Calu3 (cell line): ENCODE measurements at regions of chr4 and their contacts with region 1.

Region 1: DNA sequence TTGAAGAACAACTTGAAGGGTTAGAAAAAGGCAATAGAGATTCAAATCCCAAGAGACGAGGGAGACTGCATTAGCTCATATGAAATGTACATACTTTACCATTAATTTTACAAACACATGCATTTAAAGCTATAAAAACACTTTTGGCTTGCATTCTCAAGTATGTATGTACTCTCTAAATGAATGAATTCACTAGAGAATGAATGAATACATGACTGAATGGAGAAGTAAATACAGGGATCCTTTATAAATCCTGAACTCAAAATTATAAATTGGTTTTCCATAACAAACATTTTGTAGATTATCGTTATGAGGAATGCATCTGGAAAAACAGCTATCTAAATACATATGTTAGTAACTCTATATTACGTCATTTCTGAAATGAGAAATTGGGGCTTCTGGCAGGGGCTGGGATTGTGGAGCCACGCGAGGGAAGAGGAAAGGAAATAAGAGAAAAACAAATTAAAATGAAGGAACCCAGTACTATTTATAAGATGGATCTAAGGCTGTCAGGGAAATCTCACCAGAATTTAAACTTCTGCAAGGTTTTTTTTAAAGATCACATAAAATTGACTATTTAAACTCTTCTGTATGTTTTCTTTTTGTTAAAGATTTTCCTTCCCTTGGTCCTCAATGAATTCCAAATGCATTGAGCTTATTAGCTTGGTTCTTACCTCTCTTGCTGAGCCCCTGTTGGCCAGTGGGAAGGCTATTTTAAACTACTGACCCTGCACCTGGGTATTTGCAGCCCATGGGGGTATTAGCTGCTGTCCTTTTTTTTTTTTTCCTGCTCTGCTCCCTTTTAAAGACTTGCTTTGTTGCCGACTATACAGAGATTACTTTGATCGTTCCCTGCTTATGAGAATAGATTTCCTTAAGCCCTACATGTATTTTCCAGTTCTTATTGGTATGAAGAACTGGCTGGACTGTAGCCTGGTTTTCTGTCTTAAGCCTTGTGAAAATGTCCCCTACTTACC is 207.8 kb downstream of the ADGRL3 start:
- DNase-seq: no peak
- H3K4me3 Mint-ChIP-seq: no peak overlapping the region
- H3K27ac Mint-ChIP-seq: no peak overlapping the region
- H3K4me1 Mint-ChIP-seq: no peaks in the 10 kb centered on the region
- H3K27me3 Mint-ChIP-seq: no peaks in the 10 kb centered on the region
- CTCF ChIP-seq: no peak

Region 2: DNA sequence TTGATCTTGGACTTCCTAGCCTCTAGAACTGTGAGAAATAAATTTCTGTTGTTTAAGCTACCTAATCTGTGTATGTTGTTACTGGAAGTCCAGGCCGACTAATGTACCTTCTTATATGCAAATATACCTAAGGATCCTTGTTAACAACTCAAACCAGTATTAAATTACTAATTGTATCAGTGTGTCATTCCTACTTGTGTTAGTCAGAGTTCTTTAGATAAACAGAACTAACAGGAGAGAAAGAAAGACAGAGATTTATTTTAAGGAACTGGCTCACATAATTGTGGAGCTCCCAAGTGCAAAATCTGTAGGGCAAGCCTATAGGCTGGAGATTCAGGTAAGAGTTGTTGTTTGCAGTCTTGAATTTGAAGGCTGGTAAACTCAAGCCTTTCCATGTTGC is 87.8 kb before region 1 on chr4:
- CTCF ChIA-PET with region 1: no interaction called
- intact Hi-C with region 1: no loop called
- DNase-seq: no peak
- H3K4me3 Mint-ChIP-seq: no peak overlapping the region
- H3K27ac Mint-ChIP-seq: no peak overlapping the region
- H3K4me1 Mint-ChIP-seq: no peaks in the 10 kb centered on the region
- H3K27me3 Mint-ChIP-seq: no peaks in the 10 kb centered on the region
- CTCF ChIP-seq: no peak

Region 3: GRCh38 chr4:61336488-61336887 is 71.4 kb before region 1 on chr4:
- CTCF ChIA-PET with region 1: no interaction called
- intact Hi-C with region 1: no loop called
- DNase-seq: no peak
- H3K4me3 Mint-ChIP-seq: no peak overlapping the region
- H3K27ac Mint-ChIP-seq: no peak overlapping the region
- H3K4me1 Mint-ChIP-seq: peaks cover 17% of the 10 kb centered on the region
- H3K27me3 Mint-ChIP-seq: no peaks in the 10 kb centered on the region
- CTCF ChIP-seq: no peak

Region 4: DNA sequence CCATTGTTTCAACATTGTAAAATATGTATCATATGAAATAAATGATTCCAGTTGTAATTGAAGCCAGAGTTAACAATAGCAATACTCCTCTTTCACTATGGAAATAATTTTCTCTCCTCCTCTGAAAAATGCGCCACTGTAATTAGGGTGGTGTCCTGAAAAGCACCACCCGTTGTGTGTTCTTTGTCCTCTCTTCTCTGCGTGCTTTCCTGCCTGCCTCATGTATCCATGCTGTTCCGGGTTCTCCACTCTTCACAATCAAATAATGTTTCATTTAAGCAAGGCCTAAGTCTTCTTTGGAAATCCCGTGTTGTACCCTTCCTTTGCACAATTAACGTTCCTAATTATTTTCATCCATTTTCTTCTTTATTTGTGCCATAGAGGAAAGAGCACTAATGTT is 85.5 kb after region 1 on chr4:
- CTCF ChIA-PET with region 1: no interaction called
- intact Hi-C with region 1: loop called (anchors 5 kb)
- DNase-seq: peak; percentile 6
- H3K4me3 Mint-ChIP-seq: peak overlapping the region; percentile 21
- H3K27ac Mint-ChIP-seq: peak overlapping the region; percentile 33
- H3K4me1 Mint-ChIP-seq: peaks cover 18% of the 10 kb centered on the region
- H3K27me3 Mint-ChIP-seq: no peaks in the 10 kb centered on the region
- CTCF ChIP-seq: no peak